ENCODE measurements at regions of chr5 and their contacts with region 1.

Region 1: GRCh38 chr5:149264439-149265067 is 7.1 kb upstream of the AFAP1L1 start:
- DNase-seq: no peak
- H3K4me3 ChIP-seq: no peak overlapping the region
- H3K27me3 ChIP-seq: no peaks in the 10 kb centered on the region
- CTCF ChIP-seq: peak; percentile 40

Region 2: DNA sequence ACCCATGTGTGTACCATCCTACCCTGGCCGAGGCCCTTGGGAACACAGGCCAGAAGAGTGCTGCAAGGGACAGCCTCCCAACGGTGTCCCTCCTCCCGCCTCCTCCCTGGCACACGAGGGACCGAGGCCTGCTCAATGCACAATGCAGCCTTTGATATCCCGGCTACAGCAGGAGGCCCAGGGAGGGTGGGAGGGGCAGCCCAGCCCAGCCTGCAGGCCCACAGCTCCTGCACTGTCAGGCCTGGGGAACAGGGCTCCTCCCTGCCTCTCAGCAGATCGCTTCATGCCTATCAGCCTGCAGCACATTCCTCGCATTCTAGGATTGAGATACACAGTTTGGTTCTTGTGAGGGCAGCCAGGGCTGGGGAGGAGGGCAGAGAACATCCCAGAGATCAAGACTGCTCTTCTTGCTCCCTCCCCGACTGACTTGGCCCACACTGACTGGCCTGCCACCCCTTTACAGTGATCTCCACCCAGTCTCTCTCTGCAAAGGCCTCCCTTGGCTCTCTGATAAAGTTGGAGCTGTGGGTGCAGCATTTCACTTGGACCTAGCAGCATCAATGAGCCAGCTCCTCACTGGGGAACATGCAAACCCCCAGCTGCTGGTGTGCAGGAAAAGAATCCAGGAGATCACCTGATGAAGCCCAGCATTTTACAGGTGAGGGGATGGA is 201.4 kb before region 1 on chr5 and contains the start of gene SH3TC2:
- CTCF ChIA-PET with region 1: no interaction called
- POLR2A ChIA-PET with region 1: no interaction called
- DNase-seq: no peak
- H3K4me3 ChIP-seq: no peak within 1 kb of the TSS
- H3K27me3 ChIP-seq: no peaks in the 10 kb centered on the region
- CTCF ChIP-seq: no peak
- polyA plus RNA-seq, gene SH3TC2: 1.5 and 1.9 TPM in 2 replicates

Region 3: DNA sequence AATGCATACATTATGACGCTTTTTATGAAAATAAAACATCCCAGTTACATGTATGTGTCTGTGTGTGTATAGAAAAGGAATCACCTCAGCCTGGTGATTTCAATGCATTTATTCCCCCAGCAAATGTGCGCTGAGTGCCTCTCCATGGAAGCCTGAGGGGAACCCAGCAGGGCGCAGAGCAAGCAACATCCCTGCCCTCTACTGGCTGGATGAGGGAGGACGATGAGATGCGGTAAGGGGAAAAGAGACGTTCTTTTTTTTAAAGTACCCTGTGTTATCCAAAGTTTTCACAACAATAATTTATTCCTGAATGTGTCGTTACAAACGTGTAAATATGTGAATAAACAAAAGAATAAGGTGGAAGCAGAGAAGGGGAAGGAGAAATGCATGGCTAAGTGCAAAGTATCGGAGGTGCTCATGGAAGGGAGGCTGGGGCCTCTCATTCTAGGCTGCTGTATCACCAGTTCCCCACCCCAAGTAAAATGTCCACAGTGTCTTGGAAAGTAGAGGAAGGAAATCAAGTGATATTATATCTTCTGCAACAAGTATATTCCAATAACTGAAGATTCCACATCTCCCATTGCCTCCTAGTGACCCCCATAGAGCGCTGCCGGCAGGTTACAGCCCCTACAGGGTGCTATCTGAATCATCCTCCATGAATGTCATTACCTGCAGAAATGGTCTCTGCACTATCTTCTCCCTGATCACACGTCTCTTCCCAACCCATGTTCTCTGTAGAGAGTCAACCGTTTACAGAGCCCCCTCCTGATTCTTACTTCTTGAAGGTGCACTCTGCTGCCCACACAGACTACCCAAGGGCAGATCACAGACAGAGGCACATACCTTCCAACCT is 136.3 kb before region 1 on chr5:
- CTCF ChIA-PET with region 1: interaction called, 11 read pairs
- POLR2A ChIA-PET with region 1: no interaction called
- DNase-seq: no peak
- H3K4me3 ChIP-seq: no peak overlapping the region
- H3K27me3 ChIP-seq: no peaks in the 10 kb centered on the region
- CTCF ChIP-seq: peak; percentile 94

Region 4: GRCh38 chr5:149277801-149278200 is 13.2 kb after region 1 on chr5:
- CTCF ChIA-PET with region 1: interaction called, 12 read pairs
- POLR2A ChIA-PET with region 1: no interaction called
- DNase-seq: no peak
- H3K4me3 ChIP-seq: no peak overlapping the region
- H3K27me3 ChIP-seq: no peaks in the 10 kb centered on the region
- CTCF ChIP-seq: no peak